Mammary epithelial cell (primary cell): ENCODE measurements at regions of chr14 and their contacts with region 1.

Region 1: DNA sequence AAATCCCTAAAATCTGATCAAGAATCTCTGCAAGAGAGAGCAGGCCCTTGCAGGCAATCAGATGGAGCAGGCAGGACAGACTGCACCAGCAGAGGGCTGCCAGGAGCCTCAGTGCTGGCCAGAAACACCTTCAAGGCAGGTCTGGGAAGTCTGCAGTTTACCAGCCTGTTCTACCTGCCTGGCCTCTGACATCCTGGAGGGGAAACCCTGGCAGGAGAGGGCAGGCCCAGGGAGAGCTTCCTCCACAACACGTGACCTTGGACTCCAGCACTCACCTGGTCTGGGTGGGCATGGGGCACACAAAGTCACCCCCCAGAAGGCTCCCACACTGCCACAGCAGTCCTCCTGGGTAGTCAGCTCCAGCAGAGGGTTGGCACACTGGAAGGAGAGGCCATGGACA is 56.0 kb downstream of the ISCA2 start:
- DNase-seq: peak; percentile 36
- H3K4me3 ChIP-seq: no peak overlapping the region
- H3K27ac ChIP-seq: no peak overlapping the region
- H3K4me1 ChIP-seq: peaks cover 4% of the 10 kb centered on the region
- H3K27me3 ChIP-seq: no peaks in the 10 kb centered on the region
- CTCF ChIP-seq: peak; percentile 38 to 90

Region 2: DNA sequence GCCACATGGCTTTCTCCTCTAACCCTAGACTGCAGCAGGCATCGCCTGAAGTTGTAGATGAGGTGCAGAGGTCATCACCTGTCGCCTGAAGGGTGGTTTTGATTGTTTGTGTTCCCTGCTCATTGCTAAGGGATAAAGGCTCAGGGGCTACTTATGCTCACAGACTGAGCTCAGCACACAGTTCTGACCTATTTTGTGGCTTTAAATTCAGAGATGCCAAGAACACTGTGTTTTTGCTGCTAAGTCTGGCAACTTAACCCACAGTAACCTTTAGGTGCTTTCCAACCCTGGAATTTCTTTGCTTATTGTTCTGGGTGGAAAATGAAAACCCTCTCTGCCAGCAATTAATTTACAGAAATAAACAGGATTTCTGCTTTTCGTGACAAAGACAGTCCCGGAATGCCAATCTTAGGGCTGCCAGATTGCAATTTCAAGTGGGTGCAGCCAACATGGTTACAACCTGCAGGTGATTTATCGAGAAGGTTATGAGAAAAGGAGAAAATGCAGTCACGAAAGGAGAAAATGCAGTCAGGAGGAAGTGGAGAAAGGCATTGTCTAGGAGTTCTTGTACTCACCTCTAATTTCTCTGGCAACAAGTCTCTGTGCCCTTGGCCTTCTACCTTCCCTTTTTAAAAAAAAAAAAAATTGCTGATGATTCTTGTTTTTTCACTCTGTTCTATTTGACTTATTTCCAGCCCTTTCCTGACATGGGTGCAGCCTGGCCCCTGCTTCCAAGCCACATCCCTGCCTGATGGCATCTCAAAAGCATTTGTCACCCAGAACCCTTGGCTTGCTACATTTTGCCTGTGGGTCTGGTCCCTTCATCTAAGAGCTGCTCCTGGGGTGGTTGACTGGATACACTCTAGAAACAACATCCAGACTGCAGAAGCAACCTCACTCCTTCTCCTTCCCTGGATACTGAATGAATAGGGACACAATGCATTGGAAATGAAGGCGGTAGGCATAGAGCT is 79.8 kb before region 1 on chr14:
- CTCF ChIA-PET with region 1: no interaction called
- dilution Hi-C with region 1: no loop called
- in situ Hi-C with region 1: no loop called
- intact Hi-C with region 1: no loop called
- DNase-seq: no peak
- H3K4me3 ChIP-seq: no peak overlapping the region
- H3K27ac ChIP-seq: no peak overlapping the region
- H3K4me1 ChIP-seq: no peaks in the 10 kb centered on the region
- H3K27me3 ChIP-seq: no peaks in the 10 kb centered on the region
- CTCF ChIP-seq: no peak

Region 3: DNA sequence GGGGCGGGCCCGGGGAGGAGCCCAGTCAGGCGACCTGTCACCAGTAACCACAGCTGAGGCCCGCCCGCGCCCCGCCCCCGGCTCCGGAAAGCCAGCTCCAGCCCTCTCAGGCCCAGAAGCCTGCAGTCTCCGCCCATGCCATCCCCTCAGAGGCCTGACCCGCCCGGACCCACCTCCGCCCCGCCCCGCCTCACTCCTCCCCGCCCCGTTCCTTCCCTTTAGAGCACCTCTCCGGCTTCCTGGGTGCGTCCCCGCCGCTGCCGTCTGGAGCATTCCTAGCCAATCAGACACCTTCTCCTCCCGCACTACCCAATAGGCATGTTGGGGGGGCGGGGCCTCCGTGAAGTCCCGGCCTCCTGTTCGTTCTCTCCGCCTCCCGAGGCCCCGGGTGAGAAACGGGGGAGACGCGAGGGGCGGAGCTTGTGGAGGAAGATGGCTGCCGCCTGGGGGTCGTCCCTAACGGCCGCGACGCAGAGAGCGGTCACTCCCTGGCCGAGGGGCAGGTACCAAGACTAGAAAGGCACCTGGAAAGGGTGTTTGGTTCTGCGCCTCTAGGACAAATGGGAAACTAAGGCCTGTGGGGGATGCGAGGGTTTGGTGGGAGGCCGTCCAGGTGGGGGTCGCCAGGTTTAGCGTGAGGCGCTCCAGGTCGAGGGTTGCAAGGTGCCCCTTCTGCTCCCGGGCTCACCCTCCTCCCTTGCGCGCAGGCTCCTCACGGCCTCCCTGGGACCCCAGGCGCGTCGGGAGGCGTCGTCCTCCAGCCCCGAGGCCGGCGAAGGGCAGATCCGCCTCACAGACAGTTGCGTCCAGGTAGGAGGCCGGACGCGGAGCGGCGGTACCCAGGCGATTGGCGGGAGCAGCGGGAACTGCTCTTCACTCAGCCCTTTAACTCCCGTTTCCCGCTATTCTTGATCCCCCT is 56.0 kb before region 1 on chr14 and contains the start of gene ISCA2:
- CTCF ChIA-PET with region 1: no interaction called
- dilution Hi-C with region 1: loop called (anchors 5 kb)
- in situ Hi-C with region 1: no loop called
- intact Hi-C with region 1: no loop called
- DNase-seq: peak; percentile 99
- H3K4me3 ChIP-seq: peak within 1 kb of the TSS; percentile 76 to 96 (median 80)
- H3K27ac ChIP-seq: peak within 1 kb of the TSS; percentile 71
- H3K4me1 ChIP-seq: peaks cover 37% of the 10 kb centered on the region
- H3K27me3 ChIP-seq: no peaks in the 10 kb centered on the region
- CTCF ChIP-seq: no peak
- total RNA-seq, gene ISCA2: 6.7 to 18.2 TPM

Region 4: DNA sequence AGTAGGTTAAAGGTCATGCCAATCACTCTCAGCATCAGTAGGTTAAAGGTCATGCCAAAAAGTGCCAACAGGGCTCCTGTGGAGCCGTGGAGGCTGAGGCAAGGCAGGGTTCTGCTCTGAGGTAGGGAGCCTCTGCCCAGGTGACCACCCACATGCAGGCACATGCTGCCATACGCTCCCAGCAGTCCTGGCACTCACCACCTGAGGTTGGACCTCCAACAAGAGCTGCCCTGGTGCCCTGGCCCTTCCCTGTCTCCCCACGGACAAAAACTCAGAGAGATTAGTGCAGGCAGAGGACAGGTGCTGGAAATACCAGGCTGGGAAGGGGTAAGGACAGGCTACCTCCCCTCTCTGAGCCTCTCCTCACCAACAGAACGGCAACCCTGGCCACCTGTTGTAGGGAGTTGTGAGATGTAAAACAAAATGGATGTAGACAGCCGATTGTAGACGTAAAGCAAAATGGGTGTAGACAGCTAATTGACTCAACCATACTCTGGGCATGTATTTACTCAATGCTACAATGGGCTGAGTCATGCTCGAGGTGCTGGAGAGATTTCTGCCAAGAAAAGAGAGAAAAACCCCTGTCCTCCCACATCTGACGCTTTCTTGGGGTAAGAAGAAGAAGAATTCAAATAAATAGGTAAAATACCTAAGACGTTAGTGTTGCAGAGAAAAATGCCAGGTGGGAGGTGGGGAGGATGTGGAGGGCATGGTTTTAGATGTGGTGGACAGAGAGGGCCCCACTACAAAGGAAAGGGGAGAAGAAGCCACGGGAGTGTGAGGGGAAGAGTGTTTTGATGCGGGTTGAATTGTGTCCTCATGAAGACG is 30.1 kb after region 1 on chr14:
- CTCF ChIA-PET with region 1: no interaction called
- dilution Hi-C with region 1: no loop called
- in situ Hi-C with region 1: no loop called
- intact Hi-C with region 1: loop called (anchors 1 kb)
- DNase-seq: peak; percentile 95
- H3K4me3 ChIP-seq: no peak overlapping the region
- H3K27ac ChIP-seq: peak overlapping the region; percentile 88
- H3K4me1 ChIP-seq: peaks cover 74% of the 10 kb centered on the region
- H3K27me3 ChIP-seq: no peaks in the 10 kb centered on the region
- CTCF ChIP-seq: no peak

Region 5: DNA sequence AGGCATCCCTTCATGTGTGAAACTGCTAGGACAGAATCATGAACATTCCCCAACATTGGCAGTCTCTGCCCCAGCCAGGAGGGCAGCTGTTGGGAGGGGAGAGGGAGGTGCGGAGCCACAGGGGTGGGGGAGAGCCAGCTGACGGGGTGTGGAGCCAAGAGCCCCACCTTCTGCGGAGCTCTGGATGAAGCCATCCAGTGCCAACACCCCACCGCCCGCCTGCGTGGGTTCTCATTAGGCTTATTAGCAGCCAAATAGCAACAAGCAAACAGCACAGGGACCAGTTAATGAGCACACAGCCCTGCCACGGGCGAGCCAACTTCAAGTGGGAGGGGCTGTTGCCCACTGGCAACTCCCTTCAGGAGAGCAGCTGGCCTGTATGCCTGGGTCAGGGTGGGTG is 50.4 kb after region 1 on chr14:
- CTCF ChIA-PET with region 1: no interaction called
- dilution Hi-C with region 1: loop called (anchors 5 kb)
- in situ Hi-C with region 1: no loop called
- intact Hi-C with region 1: no loop called
- DNase-seq: no peak
- H3K4me3 ChIP-seq: no peak overlapping the region
- H3K27ac ChIP-seq: no peak overlapping the region
- H3K4me1 ChIP-seq: peaks cover 4% of the 10 kb centered on the region
- H3K27me3 ChIP-seq: no peaks in the 10 kb centered on the region
- CTCF ChIP-seq: no peak

Region 6: GRCh38 chr14:74804219-74804826 is 254.7 kb after region 1 on chr14:
- CTCF ChIA-PET with region 1: no interaction called
- dilution Hi-C with region 1: no loop called
- in situ Hi-C with region 1: no loop called
- intact Hi-C with region 1: loop called (anchors 1 kb)
- DNase-seq: peak; percentile 33
- H3K4me3 ChIP-seq: no peak overlapping the region
- H3K27ac ChIP-seq: no peak overlapping the region
- H3K4me1 ChIP-seq: no peaks in the 10 kb centered on the region
- H3K27me3 ChIP-seq: no peaks in the 10 kb centered on the region
- CTCF ChIP-seq: peak; percentile 33 to 51